ENCODE measurements at regions of chr16 and their contacts with region 1.

Region 1: GRCh38 chr16:29805378-29806098 is 791 bp upstream of the MAZ start:
- DNase-seq: peak; percentile 76
- H3K4me3 ChIP-seq: peak overlapping the region; percentile 53
- H3K27me3 ChIP-seq: no peaks in the 10 kb centered on the region
- CTCF ChIP-seq: no peak

Region 2: DNA sequence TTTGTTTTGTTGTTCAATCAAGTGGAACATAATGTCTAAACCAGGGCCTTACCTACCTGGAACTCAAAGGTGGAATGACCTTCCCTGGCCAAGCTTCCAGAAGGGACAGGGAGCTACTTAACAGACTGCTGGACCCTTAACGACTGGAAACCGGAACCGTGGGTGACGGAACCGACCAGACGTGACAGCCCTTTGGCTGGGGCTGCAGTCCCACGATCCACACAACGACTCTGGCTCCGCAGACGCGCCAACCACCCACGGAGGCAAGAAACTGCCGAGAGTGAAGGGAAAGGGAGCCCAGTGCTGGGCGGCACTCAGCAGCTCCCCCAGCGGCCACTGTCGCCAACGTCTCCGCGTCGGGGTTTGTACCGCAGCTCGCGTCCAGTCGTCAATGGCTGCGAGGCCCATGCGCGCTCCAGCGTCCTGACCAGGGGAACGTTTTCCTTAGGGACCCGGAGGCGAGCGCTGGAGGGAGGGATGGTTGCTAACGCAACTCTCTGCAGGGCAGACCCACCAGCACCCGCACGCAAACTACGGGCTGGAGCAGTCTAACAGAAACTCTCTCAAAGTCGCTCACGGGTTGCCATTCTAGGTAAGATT is 20.5 kb before region 1 on chr16:
- CTCF ChIA-PET with region 1: interaction called, 35 read pairs
- POLR2A ChIA-PET with region 1: no interaction called
- DNase-seq: no peak
- H3K4me3 ChIP-seq: 0 out of 2 replicates have a peak overlapping the region, but pooled peaks have one; percentile 2
- H3K27me3 ChIP-seq: peaks cover 4% of the 10 kb centered on the region; the same call in 1 of the 2 replicates
- CTCF ChIP-seq: peak; percentile 86

Region 3: GRCh38 chr16:29790183-29790952 is 15.2 kb before region 1 on chr16 and contains the start of gene KIF22:
- CTCF ChIA-PET with region 1: interaction called, 35 read pairs
- POLR2A ChIA-PET with region 1: no interaction called
- DNase-seq: peak; percentile 90
- H3K4me3 ChIP-seq: peak within 1 kb of the TSS; percentile 85
- H3K27me3 ChIP-seq: no peaks in the 10 kb centered on the region
- CTCF ChIP-seq: peak; percentile 86
- polyA plus RNA-seq, gene KIF22: 43.0 and 68.3 TPM in 2 replicates

Region 4: DNA sequence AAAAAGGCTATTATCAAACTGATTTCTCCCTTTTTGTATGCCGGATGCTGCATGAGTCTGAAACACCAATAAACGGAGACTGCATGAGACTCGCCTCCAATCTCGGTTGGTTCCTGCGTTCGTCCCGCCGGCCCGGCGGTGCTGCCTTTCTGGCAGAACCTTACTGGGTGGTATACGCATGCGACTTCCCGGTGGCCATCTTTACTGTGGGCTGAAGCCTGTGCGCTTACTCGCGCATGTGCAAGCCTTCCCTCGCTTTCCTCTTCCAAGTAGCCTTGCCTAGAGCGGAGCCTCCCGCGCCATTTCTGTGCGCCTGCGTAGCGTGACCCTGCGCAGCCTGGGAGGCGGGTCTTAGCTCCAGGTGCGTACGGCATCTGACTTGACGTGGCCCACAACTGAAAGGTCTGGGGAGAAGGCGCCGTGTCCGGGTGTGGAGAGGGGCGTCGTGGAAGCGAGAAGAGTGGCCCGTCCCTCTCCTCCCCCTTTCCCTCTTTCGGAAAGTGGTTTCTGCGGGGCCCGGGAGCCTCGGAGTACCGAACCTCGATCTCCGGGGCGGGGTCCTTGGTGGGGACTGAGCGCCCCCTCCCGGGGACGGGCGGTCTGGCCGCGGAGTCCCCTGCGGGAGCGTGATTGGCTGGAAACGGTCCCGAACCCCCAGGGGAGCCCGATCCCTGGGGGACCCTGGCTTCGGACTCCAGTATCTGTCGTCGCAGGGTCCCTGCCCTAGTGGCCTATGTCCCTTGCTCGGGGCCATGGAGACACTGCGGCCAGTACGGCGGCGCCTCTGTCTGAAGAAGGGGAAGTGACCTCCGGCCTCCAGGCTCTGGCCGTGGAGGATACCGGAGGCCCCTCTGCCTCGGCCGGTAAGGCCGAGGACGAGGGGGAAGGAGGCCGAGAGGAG is 10.5 kb after region 1 on chr16 and contains the start of gene PAGR1:
- CTCF ChIA-PET with region 1: interaction called, 15 read pairs
- POLR2A ChIA-PET with region 1: interaction called, 4 read pairs
- DNase-seq: peak; percentile 98
- H3K4me3 ChIP-seq: peak within 1 kb of the TSS; percentile 85
- H3K27me3 ChIP-seq: no peaks in the 10 kb centered on the region
- CTCF ChIP-seq: peak; percentile 97
- polyA plus RNA-seq, gene PAGR1: 13.9 and 15.6 TPM in 2 replicates

Region 5: GRCh38 chr16:29848420-29849297 is 43.1 kb after region 1 on chr16:
- CTCF ChIA-PET with region 1: interaction called, 30 read pairs
- POLR2A ChIA-PET with region 1: interaction called, 17 read pairs
- DNase-seq: no peak
- H3K4me3 ChIP-seq: no peak overlapping the region
- H3K27me3 ChIP-seq: no peaks in the 10 kb centered on the region
- CTCF ChIP-seq: peak; percentile 96

Region 6: DNA sequence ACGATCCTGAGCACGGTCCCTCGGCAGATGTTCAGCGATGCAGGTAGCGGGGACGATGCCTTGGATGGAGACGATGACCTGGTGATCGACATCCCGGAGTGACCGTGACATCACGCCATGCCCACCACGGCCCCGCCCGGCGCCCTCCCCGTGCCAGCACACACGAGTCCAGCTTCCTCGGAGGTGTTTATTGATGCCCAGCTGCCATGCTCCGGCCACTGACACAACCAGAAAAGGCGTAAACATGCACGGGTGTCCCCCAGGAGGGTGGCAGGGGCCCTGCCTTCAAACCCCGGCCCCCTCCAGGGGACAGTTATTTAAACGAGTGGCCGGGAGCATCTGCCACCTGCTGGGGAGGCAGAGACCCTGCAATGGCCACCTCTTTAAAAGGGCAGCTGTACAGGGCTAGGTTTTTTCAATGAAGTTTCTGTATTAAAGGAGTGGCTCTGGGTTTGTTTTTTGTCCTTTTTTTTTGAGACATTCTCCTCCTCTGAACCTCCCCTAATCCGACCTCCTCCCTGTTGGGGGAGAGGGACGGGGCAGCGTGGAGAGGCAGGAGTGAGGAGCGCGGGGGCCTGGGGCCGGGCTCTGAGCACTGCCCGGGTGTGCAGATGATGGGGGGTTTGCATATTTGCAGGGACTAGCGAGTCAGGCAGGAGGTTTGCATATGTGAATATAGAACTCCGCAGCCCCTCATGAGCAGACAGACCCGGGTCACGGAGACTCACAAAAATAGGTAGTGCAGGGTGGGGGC is 200.0 kb after region 1 on chr16:
- CTCF ChIA-PET with region 1: interaction called, 10 read pairs
- POLR2A ChIA-PET with region 1: no interaction called
- DNase-seq: no peak
- H3K4me3 ChIP-seq: no peak overlapping the region
- H3K27me3 ChIP-seq: peaks cover 7% of the 10 kb centered on the region
- CTCF ChIP-seq: peak; percentile 92

Measured in BJ (cell line).